ENCODE measurements at regions of chr7 and their contacts with region 1.

Region 1: GRCh38 chr7:43582503-43583423 is at the start of gene STK17A:
- DNase-seq: peak; percentile 82
- ATAC-seq: peak; percentile 66
- H3K4me3 ChIP-seq: peak within 1 kb of the TSS; percentile 84
- H3K27ac ChIP-seq: peak within 1 kb of the TSS; percentile 98
- H3K4me1 ChIP-seq: peaks cover 5% of the 10 kb centered on the region
- H3K27me3 ChIP-seq: no peaks in the 10 kb centered on the region
- CTCF ChIP-seq: peak; percentile 99 to 100 (median 100); a peak in 5 of 6 replicates
- EP300 ChIP-seq: no peak
- POLR2A ChIP-seq: peak; percentile 93
- RAD21 ChIP-seq: peak; percentile 100
- polyA plus RNA-seq, gene STK17A: 18.5 to 27.6 TPM

Region 2: DNA sequence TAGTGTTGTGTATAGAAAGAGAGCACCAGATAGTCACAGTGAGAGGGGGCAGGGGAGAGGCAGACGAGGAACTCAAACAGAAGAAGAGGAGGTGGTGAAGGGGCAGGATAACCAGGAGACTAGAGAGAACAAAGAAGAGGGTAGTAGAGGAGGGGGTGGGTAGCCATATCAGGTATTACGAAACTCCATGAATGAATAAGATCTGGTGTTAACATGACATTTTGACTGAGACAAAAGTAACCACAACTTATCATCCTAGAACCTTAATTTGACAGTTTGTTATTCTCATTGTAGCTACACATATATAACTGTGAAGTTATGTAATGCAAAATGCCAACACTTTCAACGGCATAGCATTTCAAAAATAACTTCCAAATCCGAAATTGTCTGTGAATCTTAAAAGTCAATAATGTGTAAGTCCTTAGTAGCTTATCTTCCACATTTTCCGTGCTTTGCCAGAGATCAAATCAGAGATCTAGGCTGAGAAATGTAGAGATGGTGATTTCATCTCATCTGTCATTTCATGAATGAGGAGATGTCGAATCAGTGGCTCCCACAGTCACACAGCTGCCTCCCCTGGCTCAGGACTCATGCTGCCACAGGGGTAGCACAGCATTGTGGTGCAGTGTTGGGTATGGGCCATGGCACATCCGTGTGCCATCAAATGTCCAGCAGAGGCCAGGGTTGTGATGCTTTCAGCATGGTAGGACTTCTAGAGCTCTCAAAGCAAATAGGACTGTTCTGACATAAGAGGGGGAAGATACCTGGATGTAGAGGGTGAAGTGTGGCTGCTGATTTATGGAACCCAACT is 268.2 kb before region 1 on chr7:
- CTCF ChIA-PET with region 1: interaction called, 4 read pairs
- POLR2A ChIA-PET with region 1: no interaction called
- RAD21 ChIA-PET with region 1: interaction called, 10 read pairs
- SMC1A ChIA-PET with region 1: no interaction called
- in situ Hi-C with region 1: no loop called
- intact Hi-C with region 1: no loop called
- DNase-seq: no peak
- ATAC-seq: peak; percentile 85
- H3K4me3 ChIP-seq: no peak overlapping the region
- H3K27ac ChIP-seq: no peak overlapping the region; the same call in 1 of the 2 replicates
- H3K4me1 ChIP-seq: peaks cover 17% of the 10 kb centered on the region
- H3K27me3 ChIP-seq: no peaks in the 10 kb centered on the region
- CTCF ChIP-seq: peak in 2 of 3 experiments; percentile 11 to 36; a peak in 3 of 6 replicates
- EP300 ChIP-seq: peak; percentile 92 to 96; a peak in 3 of 4 replicates
- POLR2A ChIP-seq: no peak
- RAD21 ChIP-seq: peak; percentile 18; the same call in 1 of the 2 replicates

Region 3: GRCh38 chr7:43394441-43395130 is 188.2 kb before region 1 on chr7:
- CTCF ChIA-PET with region 1: no interaction called
- POLR2A ChIA-PET with region 1: no interaction called
- RAD21 ChIA-PET with region 1: no interaction called
- SMC1A ChIA-PET with region 1: no interaction called
- in situ Hi-C with region 1: no loop called
- intact Hi-C with region 1: no loop called
- DNase-seq: no peak
- ATAC-seq: no peak
- H3K4me3 ChIP-seq: no peak overlapping the region
- H3K27ac ChIP-seq: no peak overlapping the region
- H3K4me1 ChIP-seq: no peaks in the 10 kb centered on the region
- H3K27me3 ChIP-seq: no peaks in the 10 kb centered on the region; a peak in 1 of 4 replicates
- CTCF ChIP-seq: no peak
- EP300 ChIP-seq: no peak
- POLR2A ChIP-seq: no peak
- RAD21 ChIP-seq: no peak

Region 4: GRCh38 chr7:43602271-43602670 is 19.5 kb after region 1 on chr7:
- CTCF ChIA-PET with region 1: interaction called, 39 read pairs
- POLR2A ChIA-PET with region 1: interaction called, 6 read pairs
- RAD21 ChIA-PET with region 1: interaction called, 22 read pairs
- SMC1A ChIA-PET with region 1: interaction called, 11 read pairs
- in situ Hi-C with region 1: no loop called
- intact Hi-C with region 1: no loop called
- DNase-seq: no peak
- ATAC-seq: no peak
- H3K4me3 ChIP-seq: no peak overlapping the region
- H3K27ac ChIP-seq: no peak overlapping the region
- H3K4me1 ChIP-seq: peaks cover 4% of the 10 kb centered on the region; the same call in 1 of the 2 replicates
- H3K27me3 ChIP-seq: no peaks in the 10 kb centered on the region
- CTCF ChIP-seq: no peak
- EP300 ChIP-seq: no peak
- POLR2A ChIP-seq: no peak
- RAD21 ChIP-seq: no peak

Region 5: DNA sequence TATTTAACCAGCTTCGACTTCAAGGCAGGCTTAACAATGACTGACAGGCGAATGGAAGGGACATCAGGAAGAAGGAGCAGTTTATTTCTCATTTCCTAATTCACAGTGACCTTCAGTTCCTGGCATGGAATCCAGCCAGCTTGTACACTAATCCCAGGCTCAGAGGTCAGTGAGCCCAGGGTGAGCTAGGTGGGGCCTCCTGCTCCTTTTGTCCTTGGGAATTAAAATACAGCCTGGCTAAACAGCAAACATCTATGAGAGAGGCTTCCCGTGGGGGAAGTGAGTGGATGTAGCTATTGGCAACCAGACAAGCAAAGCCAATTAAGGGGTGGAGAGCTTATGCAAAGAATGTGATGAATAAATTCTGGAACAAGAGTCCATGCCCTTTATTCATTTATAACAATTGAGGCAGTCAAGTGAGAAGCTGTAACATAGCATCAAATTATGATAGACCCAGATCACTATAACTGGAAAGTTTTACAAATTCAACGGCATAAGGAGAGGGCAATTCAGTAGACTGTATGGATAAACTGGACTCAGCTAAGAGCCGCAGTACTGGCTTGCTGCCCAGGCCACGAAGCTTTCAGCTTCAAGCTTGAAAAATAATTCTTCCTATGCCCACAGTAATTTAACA is 57.2 kb after region 1 on chr7:
- CTCF ChIA-PET with region 1: interaction called, 183 read pairs
- POLR2A ChIA-PET with region 1: interaction called, 138 read pairs
- RAD21 ChIA-PET with region 1: interaction called, 280 read pairs
- SMC1A ChIA-PET with region 1: interaction called, 163 read pairs
- in situ Hi-C with region 1: no loop called
- intact Hi-C with region 1: no loop called
- DNase-seq: no peak
- ATAC-seq: no peak
- H3K4me3 ChIP-seq: no peak overlapping the region
- H3K27ac ChIP-seq: no peak overlapping the region
- H3K4me1 ChIP-seq: no peaks in the 10 kb centered on the region
- H3K27me3 ChIP-seq: no peaks in the 10 kb centered on the region
- CTCF ChIP-seq: no peak
- EP300 ChIP-seq: no peak
- POLR2A ChIP-seq: no peak
- RAD21 ChIP-seq: no peak

Region 6: DNA sequence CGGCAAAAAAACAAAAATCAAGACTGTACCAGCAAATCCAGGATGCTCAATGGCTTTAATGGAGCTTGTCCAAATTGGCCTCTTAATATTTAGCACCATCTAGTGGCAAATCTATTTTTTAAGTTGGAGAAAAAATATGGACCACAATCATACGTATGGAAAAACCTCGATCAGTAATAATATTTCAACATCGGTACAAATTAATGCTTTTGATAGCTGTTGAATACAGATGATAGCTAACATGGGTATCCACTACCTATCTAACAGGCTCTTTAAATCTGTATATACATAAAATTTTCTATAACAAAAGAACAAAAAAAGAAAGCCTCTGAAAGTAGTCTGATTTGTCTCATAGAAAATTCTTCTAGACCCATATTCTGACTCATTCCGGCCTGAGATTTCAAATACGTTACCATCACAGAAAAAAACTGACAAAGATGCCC is 117.3 kb after region 1 on chr7:
- CTCF ChIA-PET with region 1: interaction called, 456 read pairs
- POLR2A ChIA-PET with region 1: interaction called, 54 read pairs
- RAD21 ChIA-PET with region 1: interaction called, 516 read pairs
- SMC1A ChIA-PET with region 1: interaction called, 307 read pairs
- in situ Hi-C with region 1: loop called (anchors 10 kb)
- intact Hi-C with region 1: loop called (anchors 1 kb)
- DNase-seq: no peak
- ATAC-seq: peak; percentile 66
- H3K4me3 ChIP-seq: no peak overlapping the region
- H3K27ac ChIP-seq: no peak overlapping the region
- H3K4me1 ChIP-seq: peaks cover 43% of the 10 kb centered on the region
- H3K27me3 ChIP-seq: no peaks in the 10 kb centered on the region
- CTCF ChIP-seq: peak; percentile 40 to 77 (median 50); a peak in 5 of 6 replicates
- EP300 ChIP-seq: no peak
- POLR2A ChIP-seq: no peak
- RAD21 ChIP-seq: peak; percentile 96

Region 7: DNA sequence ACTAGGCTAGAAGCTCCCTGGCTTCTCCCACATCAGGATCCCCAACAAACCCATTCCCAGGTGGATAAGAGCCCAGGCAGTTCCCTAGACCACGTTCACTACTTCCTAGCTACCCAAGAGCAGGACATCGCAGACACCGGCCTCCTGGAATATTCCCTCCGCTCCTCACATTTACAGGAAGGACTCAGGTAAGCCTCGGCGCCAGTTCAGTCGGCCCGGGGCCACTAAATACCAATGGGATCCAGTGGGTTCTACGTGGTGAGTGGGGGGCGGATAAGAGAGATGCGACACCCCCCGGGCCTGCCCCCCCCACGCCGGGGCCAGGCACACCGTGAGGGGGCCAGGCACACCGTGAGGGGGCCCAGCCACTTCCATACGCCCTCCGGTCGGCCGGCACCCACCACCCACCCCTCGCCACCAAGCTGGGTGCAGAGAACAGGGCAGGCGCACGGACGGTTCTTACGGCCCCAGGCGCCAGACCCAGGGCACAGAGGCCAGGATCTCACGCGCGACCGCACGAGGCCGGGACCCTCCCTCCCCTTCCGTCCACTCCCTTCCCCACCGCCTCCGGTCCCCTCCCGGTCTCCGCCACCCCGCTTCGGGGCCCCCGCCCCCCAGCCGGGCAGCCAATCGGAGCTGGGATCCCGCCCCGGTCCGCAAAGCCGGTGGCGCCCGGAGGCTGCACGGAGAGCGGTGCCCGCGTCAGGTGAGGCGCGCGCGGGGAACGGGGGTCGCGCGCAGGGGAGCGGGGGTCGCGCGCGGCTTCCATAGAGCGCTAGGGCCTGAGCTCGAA is 175.5 kb after region 1 on chr7 and contains the start of gene BLVRA:
- CTCF ChIA-PET with region 1: interaction called, 15 read pairs
- POLR2A ChIA-PET with region 1: interaction called, 4 read pairs
- RAD21 ChIA-PET with region 1: interaction called, 15 read pairs
- SMC1A ChIA-PET with region 1: interaction called, 7 read pairs
- in situ Hi-C with region 1: no loop called
- intact Hi-C with region 1: no loop called
- DNase-seq: no peak
- ATAC-seq: peak; percentile 82
- H3K4me3 ChIP-seq: peak within 1 kb of the TSS; percentile 87
- H3K27ac ChIP-seq: peak within 1 kb of the TSS; percentile 73
- H3K4me1 ChIP-seq: peaks cover 38% of the 10 kb centered on the region
- H3K27me3 ChIP-seq: no peaks in the 10 kb centered on the region
- CTCF ChIP-seq: no peak
- EP300 ChIP-seq: no peak
- POLR2A ChIP-seq: peak; percentile 70
- RAD21 ChIP-seq: no peak
- polyA plus RNA-seq, gene BLVRA: 187 to 198 TPM

Region 8: GRCh38 chr7:43844031-43844656 is 261.4 kb after region 1 on chr7:
- CTCF ChIA-PET with region 1: interaction called, 214 read pairs
- POLR2A ChIA-PET with region 1: interaction called, 4 read pairs
- RAD21 ChIA-PET with region 1: interaction called, 120 read pairs
- SMC1A ChIA-PET with region 1: interaction called, 121 read pairs
- in situ Hi-C with region 1: loop called (anchors 5 kb)
- intact Hi-C with region 1: loop called (anchors 2 kb)
- DNase-seq: no peak
- ATAC-seq: no peak
- H3K4me3 ChIP-seq: no peak overlapping the region
- H3K27ac ChIP-seq: no peak overlapping the region
- H3K4me1 ChIP-seq: no peaks in the 10 kb centered on the region
- H3K27me3 ChIP-seq: no peaks in the 10 kb centered on the region
- CTCF ChIP-seq: no peak
- EP300 ChIP-seq: no peak
- POLR2A ChIP-seq: no peak
- RAD21 ChIP-seq: no peak